T-cell (primary cell): ENCODE measurements at regions of chr7 and their contacts with region 1.

Region 1: GRCh38 chr7:131412031-131412430 is 84.4 kb downstream of the MKLN1 start:
- DNase-seq: no peak
- ATAC-seq: no peak
- H3K4me3 ChIP-seq: no peak overlapping the region
- H3K4me3 Mint-ChIP-seq: no peak overlapping the region
- H3K27ac ChIP-seq: no peak overlapping the region
- H3K27ac Mint-ChIP-seq: no peak overlapping the region
- H3K4me1 ChIP-seq: no peaks in the 10 kb centered on the region
- H3K4me1 Mint-ChIP-seq: peaks cover 1 to 11% (median 8%) of the 10 kb centered on the region in 3 donors
- H3K27me3 ChIP-seq: no peaks in the 10 kb centered on the region
- H3K27me3 Mint-ChIP-seq: no peaks in the 10 kb centered on the region

Region 2: DNA sequence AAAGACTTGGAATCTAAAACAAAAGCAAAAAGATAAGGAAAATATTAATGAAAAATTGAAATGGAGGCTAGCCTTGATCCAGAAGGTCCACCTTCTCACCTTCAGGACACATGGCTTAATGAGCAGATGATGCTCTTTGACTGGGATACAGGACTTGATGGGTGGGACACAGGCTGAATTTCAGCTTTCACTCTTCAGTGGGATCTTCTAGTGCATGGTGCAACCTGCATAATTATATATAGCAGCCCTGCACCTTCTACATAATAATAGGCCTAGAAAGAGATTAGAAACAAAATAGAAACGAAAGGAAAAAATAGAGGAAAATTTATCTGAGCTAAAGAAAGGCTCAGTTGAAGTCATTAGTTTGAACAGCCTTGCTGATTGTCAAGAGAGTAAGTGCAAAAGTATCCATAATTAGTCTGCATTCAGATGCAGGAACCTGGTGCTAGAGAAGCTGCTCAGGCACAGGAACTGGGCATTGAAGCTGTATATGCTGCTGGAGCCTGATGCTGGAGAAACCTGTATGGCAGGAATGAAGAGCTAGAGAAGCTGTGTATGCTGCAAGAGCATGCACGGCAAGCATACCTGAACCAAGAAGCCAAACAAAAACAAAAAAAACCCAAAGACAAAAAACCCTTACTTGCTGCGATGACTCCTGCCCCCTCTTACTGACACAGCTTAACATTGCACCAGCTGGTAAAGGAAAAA is 65.0 kb before region 1 on chr7:
- CTCF ChIA-PET with region 1: no interaction called
- POLR2A ChIA-PET with region 1: no interaction called
- DNase-seq: no peak
- ATAC-seq: peak in 1 of 4 experiments; percentile 28
- H3K4me3 ChIP-seq: no peak overlapping the region
- H3K4me3 Mint-ChIP-seq: no peak overlapping the region
- H3K27ac ChIP-seq: no peak overlapping the region
- H3K27ac Mint-ChIP-seq: peak overlapping the region in 1 of 2 donors; percentile 1
- H3K4me1 ChIP-seq: no peaks in the 10 kb centered on the region
- H3K4me1 Mint-ChIP-seq: peaks cover 58 to 67% (median 66%) of the 10 kb centered on the region in 3 donors
- H3K27me3 ChIP-seq: no peaks in the 10 kb centered on the region
- H3K27me3 Mint-ChIP-seq: no peaks in the 10 kb centered on the region

Region 3: DNA sequence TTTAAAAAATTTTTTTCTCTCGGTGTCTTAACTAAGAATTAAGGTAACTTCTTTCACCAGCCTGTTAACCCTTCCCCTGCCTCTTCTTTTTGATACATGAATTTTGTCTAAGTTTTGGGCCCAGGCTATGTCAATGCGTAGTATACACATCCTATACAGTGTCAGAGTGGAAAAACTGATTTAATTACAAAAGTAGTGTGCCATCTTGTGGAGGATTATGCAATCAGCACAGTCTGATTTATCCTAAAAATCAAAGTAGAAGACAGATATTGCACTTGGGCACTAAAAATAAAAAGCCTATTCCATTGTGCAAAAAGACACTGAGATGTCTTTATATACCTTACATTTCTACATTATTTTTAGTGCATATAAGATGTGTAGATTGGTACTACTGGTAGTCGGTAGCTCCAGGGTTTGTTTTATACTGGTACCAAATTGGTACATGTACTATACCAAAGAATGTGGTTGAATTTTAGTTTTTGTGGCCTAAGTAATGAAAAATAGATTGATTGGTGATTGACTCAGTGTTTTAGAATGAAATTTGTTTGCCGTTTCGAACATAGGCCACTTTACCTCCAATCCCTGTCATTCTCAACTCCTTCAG is 12.3 kb after region 1 on chr7:
- CTCF ChIA-PET with region 1: interaction called in 1 of 2 experiments, 12 read pairs
- POLR2A ChIA-PET with region 1: interaction called in 1 of 2 experiments, 6 read pairs
- DNase-seq: peak in 6 of 35 experiments; percentile 1 to 63 (median 4)
- ATAC-seq: peak; percentile 61 to 81 (median 78)
- H3K4me3 ChIP-seq: no peak overlapping the region
- H3K4me3 Mint-ChIP-seq: no peak overlapping the region
- H3K27ac ChIP-seq: no peak overlapping the region
- H3K27ac Mint-ChIP-seq: no peak overlapping the region
- H3K4me1 ChIP-seq: no peaks in the 10 kb centered on the region
- H3K4me1 Mint-ChIP-seq: peaks cover 0 to 14% (median 7%) of the 10 kb centered on the region in 3 donors
- H3K27me3 ChIP-seq: no peaks in the 10 kb centered on the region
- H3K27me3 Mint-ChIP-seq: no peaks in the 10 kb centered on the region

Region 4: DNA sequence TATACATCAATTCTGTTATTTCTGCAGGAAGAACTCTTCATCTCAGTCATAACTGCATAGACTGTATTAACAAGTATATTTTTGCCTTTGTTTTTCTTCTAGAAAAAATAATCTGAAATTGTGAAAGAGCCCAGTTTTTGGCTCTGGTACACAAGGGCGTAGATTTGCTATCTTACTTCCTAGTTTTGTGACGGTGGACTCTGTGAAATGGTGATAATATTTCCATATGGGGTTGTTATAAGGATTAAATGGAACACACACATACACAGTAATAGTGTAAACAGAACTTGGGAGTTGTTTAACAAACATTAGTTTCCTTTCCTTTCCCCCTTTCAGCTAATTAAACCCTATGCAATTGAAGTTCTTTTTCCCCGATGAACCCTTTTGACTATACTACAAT is 24.4 kb after region 1 on chr7:
- CTCF ChIA-PET with region 1: no interaction called
- POLR2A ChIA-PET with region 1: no interaction called
- DNase-seq: no peak
- ATAC-seq: no peak
- H3K4me3 ChIP-seq: no peak overlapping the region
- H3K4me3 Mint-ChIP-seq: no peak overlapping the region
- H3K27ac ChIP-seq: no peak overlapping the region
- H3K27ac Mint-ChIP-seq: no peak overlapping the region
- H3K4me1 ChIP-seq: no peaks in the 10 kb centered on the region
- H3K4me1 Mint-ChIP-seq: peaks cover 8% of the 10 kb centered on the region in 3 donors
- H3K27me3 ChIP-seq: no peaks in the 10 kb centered on the region
- H3K27me3 Mint-ChIP-seq: no peaks in the 10 kb centered on the region

Region 5: GRCh38 chr7:131489881-131490280 is 77.8 kb after region 1 on chr7:
- CTCF ChIA-PET with region 1: interaction called in 1 of 2 experiments, 11 read pairs
- POLR2A ChIA-PET with region 1: no interaction called
- DNase-seq: no peak
- ATAC-seq: no peak
- H3K4me3 ChIP-seq: no peak overlapping the region
- H3K4me3 Mint-ChIP-seq: no peak overlapping the region
- H3K27ac ChIP-seq: no peak overlapping the region
- H3K27ac Mint-ChIP-seq: no peak overlapping the region
- H3K4me1 ChIP-seq: no peaks in the 10 kb centered on the region
- H3K4me1 Mint-ChIP-seq: no peaks in the 10 kb centered on the region
- H3K27me3 ChIP-seq: no peaks in the 10 kb centered on the region
- H3K27me3 Mint-ChIP-seq: no peaks in the 10 kb centered on the region

Region 6: DNA sequence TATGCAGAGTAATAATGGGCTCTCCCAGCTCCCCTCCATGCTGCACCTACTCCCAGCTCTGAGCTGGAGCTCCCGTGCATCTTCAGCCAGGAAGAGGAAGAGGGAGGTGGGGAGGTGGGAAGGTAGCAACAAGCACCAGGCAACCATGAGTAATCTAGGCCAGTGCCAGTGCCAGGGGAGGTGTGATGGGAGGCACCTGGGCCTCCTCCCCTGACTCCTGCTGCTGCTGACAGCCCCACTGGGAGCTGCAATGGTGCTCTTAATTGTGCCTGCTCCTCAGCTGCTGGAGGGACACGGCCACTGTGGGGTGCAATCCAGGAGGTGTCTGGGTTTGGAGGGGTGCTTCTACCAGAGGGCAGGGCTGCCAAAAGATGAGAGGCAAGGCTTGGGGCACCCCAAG is 921.3 kb after region 1 on chr7:
- CTCF ChIA-PET with region 1: no interaction called
- POLR2A ChIA-PET with region 1: no interaction called
- DNase-seq: no peak
- ATAC-seq: no peak
- H3K4me3 ChIP-seq: no peak overlapping the region
- H3K4me3 Mint-ChIP-seq: no peak overlapping the region
- H3K27ac ChIP-seq: no peak overlapping the region
- H3K27ac Mint-ChIP-seq: no peak overlapping the region
- H3K4me1 ChIP-seq: no peaks in the 10 kb centered on the region
- H3K4me1 Mint-ChIP-seq: no peaks in the 10 kb centered on the region
- H3K27me3 ChIP-seq: peaks cover 0 to 10% of the 10 kb centered on the region in 2 experiments
- H3K27me3 Mint-ChIP-seq: peaks cover 4 to 11% of the 10 kb centered on the region in 2 donors